Activated naive CD4-positive, alpha-beta T cell treated with anti-CD3 and anti-CD28 coated beads for 36 hours (primary cell): ENCODE measurements at regions of chr6 and their contacts with region 1.

Region 1: DNA sequence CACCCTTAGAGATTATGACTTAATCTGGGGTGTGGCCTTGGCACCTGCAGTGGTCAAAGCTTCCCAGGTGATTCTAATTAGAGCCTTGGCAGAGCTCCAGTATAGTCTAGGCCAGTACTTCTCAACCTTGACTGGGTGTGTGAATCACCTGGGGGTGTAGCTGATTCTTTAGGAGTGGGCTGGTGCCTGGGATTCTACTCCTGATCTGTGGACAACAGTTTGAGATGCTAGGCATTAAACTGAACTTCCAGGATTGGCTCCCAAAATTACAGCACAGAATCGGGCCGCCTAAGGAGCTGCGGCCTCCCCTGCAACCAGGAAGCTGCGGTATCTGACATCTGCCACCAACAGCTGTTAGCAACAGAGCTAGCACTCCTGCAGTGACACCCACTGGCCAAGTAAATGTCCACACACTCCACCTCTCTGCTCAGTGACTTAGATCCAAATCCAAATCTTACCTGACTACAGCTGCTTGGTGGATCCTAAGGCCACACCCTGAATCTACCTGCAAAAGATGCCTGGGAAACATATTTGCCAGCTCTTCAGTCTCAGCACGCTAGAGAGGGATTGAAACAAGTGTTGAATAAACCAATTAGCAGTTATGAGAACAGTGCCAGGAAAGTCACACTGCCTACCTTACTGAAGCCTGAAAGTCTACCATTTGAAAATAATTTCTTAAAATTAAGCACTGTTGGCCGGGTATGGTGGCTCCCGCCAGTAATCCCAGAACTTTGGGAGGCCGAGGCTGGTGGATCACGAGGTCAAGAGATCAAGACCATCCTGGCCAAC is 126.7 kb downstream of the UNC5CL start:
- DNase-seq: peak; percentile 68
- H3K4me3 Mint-ChIP-seq: no peak overlapping the region
- H3K27ac Mint-ChIP-seq: no peak overlapping the region
- H3K4me1 Mint-ChIP-seq: peaks cover 3% of the 10 kb centered on the region
- H3K27me3 Mint-ChIP-seq: peaks cover 10% of the 10 kb centered on the region

Region 2: DNA sequence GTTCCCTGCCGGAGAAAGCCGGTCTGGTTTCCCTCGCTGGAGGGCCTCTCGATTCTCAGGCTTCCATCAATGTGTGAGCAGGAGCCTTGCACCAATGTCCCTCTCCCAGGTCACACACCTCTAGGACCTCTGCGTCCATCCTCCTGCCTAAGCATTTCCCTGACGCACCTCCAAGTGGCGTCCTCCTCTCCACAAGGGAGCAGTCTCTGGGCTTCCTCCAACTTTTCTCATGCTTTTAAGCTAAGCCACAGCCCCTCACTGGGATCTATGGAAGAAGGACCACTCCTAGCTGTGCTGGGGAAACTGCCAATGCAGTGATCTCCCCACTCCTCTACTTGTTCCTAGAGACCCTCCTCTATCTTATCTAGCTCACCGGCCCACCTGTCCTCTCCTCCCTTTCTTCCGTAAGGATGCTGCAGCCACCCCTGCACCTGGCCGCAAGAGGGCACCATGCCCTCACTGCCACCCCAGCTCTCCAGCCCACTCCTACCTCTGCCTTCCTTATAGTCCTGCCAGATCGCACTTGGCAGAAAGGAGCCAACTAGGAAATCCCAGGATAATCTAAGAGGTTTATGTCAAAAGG is 583.9 kb before region 1 on chr6:
- CTCF ChIA-PET with region 1: no interaction called
- intact Hi-C with region 1: loop called (anchors 5 kb)
- DNase-seq: peak; percentile 55
- H3K4me3 Mint-ChIP-seq: no peak overlapping the region
- H3K27ac Mint-ChIP-seq: no peak overlapping the region
- H3K4me1 Mint-ChIP-seq: peaks cover 2% of the 10 kb centered on the region
- H3K27me3 Mint-ChIP-seq: peaks cover 18% of the 10 kb centered on the region

Region 3: GRCh38 chr6:40550202-40551101 is 361.9 kb before region 1 on chr6:
- CTCF ChIA-PET with region 1: no interaction called
- intact Hi-C with region 1: loop called (anchors 10 kb)
- DNase-seq: peak; percentile 40
- H3K4me3 Mint-ChIP-seq: no peak overlapping the region
- H3K27ac Mint-ChIP-seq: no peak overlapping the region
- H3K4me1 Mint-ChIP-seq: no peaks in the 10 kb centered on the region
- H3K27me3 Mint-ChIP-seq: no peaks in the 10 kb centered on the region

Region 4: GRCh38 chr6:40852779-40853373 is 59.5 kb before region 1 on chr6:
- CTCF ChIA-PET with region 1: no interaction called
- intact Hi-C with region 1: loop called (anchors 5 kb)
- DNase-seq: peak; percentile 26
- H3K4me3 Mint-ChIP-seq: no peak overlapping the region
- H3K27ac Mint-ChIP-seq: peak overlapping the region; percentile 43
- H3K4me1 Mint-ChIP-seq: peaks cover 8% of the 10 kb centered on the region
- H3K27me3 Mint-ChIP-seq: no peaks in the 10 kb centered on the region